MCF 10A (cell line): ENCODE measurements at regions of chr12 and their contacts with region 1.

Region 1: DNA sequence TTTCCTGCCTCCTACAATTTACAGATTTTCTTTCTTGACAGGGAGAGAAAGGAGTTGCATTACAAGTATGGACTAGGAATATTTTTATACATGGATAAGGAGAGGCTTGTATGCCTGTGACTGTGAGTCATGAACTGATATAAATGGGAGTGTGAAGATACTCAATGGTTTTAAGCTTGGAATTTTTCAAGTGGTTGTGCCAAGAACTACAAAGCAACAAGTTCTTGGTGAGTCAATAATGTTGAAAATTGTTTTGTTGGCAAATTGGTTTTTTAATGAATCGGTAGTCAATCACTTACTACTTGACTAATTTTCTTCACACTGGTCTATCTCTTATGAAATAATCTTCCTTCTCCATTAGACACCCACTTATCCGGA is 58.9 kb upstream of the HMGA2 start:
- DNase-seq: peak; percentile 78
- H3K4me3 Mint-ChIP-seq: peak overlapping the region; percentile 52
- H3K27ac Mint-ChIP-seq: peak overlapping the region; percentile 67
- H3K4me1 Mint-ChIP-seq: peaks cover 30% of the 10 kb centered on the region
- H3K27me3 Mint-ChIP-seq: no peaks in the 10 kb centered on the region
- CTCF ChIP-seq: no peak

Region 2: GRCh38 chr12:65776994-65777393 is 11.6 kb after region 1 on chr12:
- CTCF ChIA-PET with region 1: interaction called, 5 read pairs
- POLR2A ChIA-PET with region 1: interaction called, 12 read pairs
- intact Hi-C with region 1: no loop called
- DNase-seq: no peak
- H3K4me3 Mint-ChIP-seq: no peak overlapping the region
- H3K27ac Mint-ChIP-seq: no peak overlapping the region
- H3K4me1 Mint-ChIP-seq: peaks cover 20% of the 10 kb centered on the region
- H3K27me3 Mint-ChIP-seq: no peaks in the 10 kb centered on the region
- CTCF ChIP-seq: no peak